ENCODE measurements at regions of chr10 and their contacts with region 1.

Region 1: DNA sequence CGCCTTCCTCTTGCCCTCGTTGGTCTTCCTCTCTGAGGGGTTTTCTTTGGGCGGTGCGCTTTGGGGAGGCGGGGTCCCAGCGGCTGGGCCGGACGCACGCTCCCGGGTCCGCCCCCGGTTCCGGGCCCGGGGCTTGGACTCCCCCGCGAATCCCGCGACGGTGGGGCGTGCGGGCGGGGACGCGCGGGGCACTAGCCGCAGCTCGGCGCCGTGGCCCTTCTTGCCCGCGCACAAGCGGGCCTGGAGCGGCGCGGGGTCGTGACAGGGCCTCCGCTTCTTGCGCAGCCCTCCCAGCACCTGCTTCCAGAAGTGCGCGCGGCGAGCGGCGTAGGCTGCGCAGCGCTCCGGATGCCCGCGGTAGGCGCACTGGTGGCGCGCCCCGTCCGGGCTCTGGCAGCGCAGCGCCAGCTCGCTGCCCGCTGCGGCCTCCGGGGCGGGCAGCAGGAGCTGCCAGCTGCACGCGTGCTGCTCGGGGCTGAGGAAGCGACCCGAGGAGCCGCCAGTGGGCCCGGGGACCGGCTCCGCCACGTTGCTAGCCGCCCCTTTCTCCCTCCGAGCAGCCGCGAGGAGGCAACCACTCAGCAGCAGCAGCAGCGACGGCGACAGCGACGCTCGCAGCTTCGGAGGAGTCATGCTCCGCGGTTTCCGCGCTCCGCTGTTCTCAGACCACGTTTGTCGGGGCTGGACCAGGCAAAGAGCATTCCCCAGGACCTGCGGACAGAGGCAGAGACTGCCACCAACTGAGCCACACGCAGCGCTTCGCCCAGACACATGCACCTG is 759 bp downstream of the FGFBP3 start:
- DNase-seq: peak; percentile 50 to 68 (median 55)
- H3K4me3 ChIP-seq: peak overlapping the region; percentile 75
- H3K27ac ChIP-seq: peak overlapping the region; percentile 60 to 65
- H3K4me1 ChIP-seq: no peaks in the 10 kb centered on the region
- H3K27me3 ChIP-seq: no peaks in the 10 kb centered on the region
- CTCF ChIP-seq: peak in 1 of 3 donors; percentile 11
- EP300 ChIP-seq: no peak
- POLR2A ChIP-seq: no peak

Region 2: DNA sequence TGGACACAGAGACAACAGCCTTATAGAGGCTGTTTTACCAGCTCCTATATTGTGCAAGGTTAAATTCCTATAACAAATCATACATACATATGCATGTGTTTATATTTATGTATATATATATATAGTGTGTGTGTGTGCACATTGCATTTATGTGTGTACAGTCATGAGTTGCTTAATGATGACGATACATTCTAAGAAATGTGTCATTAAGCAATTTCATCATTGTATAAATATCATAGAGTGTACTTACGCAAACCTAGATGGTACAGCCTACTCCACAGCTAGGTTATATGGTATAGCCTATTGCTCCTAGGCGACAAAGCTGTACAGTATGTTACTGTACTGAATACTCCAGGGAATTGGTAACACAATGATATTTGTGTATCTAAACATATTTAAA is 140.4 kb before region 1 on chr10:
- intact Hi-C with region 1: loop called in 3 of 4 experiments (anchors 10 kb)
- DNase-seq: no peak
- H3K4me3 ChIP-seq: no peak overlapping the region
- H3K27ac ChIP-seq: no peak overlapping the region
- H3K4me1 ChIP-seq: no peaks in the 10 kb centered on the region
- H3K27me3 ChIP-seq: no peaks in the 10 kb centered on the region
- CTCF ChIP-seq: no peak
- EP300 ChIP-seq: no peak
- POLR2A ChIP-seq: no peak

Region 3: DNA sequence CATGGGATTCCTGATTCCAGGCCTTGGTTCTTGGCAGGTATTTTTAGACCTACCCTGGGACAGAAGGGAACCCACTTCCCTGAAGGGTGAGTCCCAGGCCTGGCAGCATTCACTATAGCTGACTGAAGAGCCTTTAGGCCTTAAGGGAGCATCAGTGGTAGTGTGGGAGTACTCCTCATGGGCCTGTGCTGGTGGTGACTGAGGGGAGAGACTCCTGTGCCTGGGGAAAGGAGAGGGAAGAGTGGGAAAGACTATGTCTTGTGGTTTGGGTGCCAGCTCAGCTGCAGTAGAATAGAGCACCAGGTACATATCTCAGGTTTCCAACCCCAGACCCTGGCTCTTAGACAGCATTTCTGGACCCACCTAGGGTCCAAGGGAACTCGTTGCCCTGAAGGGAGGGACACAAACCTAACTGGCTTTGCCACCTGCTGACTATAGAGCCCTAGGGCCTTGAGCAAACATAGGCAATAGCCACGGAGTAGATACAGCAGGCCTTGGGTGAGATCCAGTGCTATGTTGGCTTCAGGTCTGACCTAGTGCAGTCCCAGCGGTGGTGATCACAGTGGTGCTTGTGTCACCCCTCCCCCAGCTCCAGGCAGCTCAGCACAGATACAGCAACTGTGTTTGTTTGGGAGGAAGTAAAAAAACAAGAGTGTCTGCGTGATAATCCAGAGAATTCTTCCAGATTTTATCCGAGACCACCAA is 120.2 kb before region 1 on chr10:
- intact Hi-C with region 1: loop called in 1 of 4 experiments (anchors 10 kb)
- DNase-seq: no peak
- H3K4me3 ChIP-seq: no peak overlapping the region
- H3K27ac ChIP-seq: no peak overlapping the region
- H3K4me1 ChIP-seq: no peaks in the 10 kb centered on the region
- H3K27me3 ChIP-seq: no peaks in the 10 kb centered on the region
- CTCF ChIP-seq: no peak
- EP300 ChIP-seq: no peak
- POLR2A ChIP-seq: no peak